ENCODE measurements at regions of chr2 and their contacts with region 1.

Region 1: DNA sequence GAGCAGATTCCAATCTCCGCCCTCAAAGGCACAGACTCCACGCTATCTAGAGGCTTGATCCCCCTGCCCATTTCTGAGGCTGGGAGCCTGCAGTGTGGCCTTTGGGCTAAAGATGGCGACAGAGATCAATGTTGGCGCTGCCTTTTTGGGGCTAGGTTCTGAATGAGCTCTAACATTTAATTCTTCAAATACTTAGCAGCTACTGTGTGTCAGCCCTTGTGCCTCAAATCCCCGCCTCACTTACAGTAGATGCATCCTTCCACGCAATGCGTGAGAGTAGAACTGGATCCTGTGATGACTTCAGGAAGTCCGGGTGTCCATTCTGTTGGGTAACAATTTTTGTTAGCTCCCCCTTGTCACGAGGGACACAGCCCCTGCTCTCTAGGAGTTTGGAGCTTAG is 12.4 kb downstream of the IL1F10 start:
- DNase-seq: peak in 1 of 2 experiments; percentile 63
- H3K4me3 ChIP-seq: peak overlapping the region; percentile 48; the same call in 1 of the 2 replicates
- H3K27ac ChIP-seq: peak overlapping the region; percentile 100
- H3K4me1 ChIP-seq: peaks cover 57% of the 10 kb centered on the region
- H3K27me3 ChIP-seq: no peaks in the 10 kb centered on the region
- CTCF ChIP-seq: peak; percentile 80

Region 2: DNA sequence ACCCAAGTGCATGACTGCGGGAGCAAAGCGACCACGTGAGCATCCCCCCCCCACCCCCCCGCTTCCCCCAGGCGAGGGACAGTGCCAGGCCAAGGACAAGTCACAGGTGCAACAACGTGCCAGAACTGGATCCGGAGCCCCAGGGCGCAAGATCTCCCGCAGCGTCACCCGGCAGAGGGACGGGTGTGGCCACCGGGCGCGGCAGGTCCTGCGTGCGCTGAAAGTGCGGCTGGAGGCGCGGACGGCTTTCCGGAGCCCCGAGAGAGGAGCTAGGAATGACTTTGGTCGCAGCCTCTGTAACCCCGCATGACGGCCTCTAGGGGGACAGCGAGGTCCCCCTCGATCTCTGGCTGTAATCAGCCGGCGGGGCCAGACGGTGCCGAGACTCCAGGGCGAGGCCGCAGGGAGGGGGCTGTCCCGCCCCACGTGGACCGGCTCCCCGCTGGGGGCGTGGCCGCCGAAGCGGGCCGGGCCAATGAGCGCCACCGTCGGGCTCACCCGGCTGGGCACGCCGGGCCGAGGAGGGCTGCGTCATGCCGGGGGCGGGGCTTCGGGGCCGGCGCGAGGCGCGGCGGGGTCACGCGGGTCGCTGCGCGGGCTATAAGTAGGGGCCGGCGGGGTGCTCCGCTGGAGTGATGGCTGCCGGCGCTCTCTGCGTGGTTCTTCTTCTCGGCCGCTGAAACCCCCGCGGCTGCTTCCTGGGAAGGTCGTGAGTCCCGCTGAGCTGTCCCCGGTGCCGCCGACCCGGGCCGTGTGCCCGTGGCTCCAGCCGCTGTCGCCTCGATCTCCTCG is 434.6 kb before region 1 on chr2 and contains the start of gene SLC20A1:
- CTCF ChIA-PET with region 1: no interaction called
- POLR2A ChIA-PET with region 1: no interaction called
- intact Hi-C with region 1: loop called (anchors 10 kb)
- DNase-seq: peak; percentile 93 to 98
- H3K4me3 ChIP-seq: peak within 1 kb of the TSS; percentile 99
- H3K27ac ChIP-seq: peak within 1 kb of the TSS; percentile 99
- H3K4me1 ChIP-seq: peaks cover 68% of the 10 kb centered on the region
- H3K27me3 ChIP-seq: no peaks in the 10 kb centered on the region
- CTCF ChIP-seq: peak; percentile 66
- total RNA-seq, gene SLC20A1: 99.9 and 106 TPM in 2 replicates

Region 3: GRCh38 chr2:112941753-112942658 is 138.1 kb before region 1 on chr2:
- CTCF ChIA-PET with region 1: interaction called, 4 read pairs
- POLR2A ChIA-PET with region 1: interaction called, 11 read pairs
- intact Hi-C with region 1: loop called (anchors 5 kb)
- DNase-seq: peak; percentile 37 to 74
- H3K4me3 ChIP-seq: no peak overlapping the region
- H3K27ac ChIP-seq: no peak overlapping the region
- H3K4me1 ChIP-seq: peaks cover 16% of the 10 kb centered on the region
- H3K27me3 ChIP-seq: no peaks in the 10 kb centered on the region
- CTCF ChIP-seq: peak; percentile 72

Region 4: DNA sequence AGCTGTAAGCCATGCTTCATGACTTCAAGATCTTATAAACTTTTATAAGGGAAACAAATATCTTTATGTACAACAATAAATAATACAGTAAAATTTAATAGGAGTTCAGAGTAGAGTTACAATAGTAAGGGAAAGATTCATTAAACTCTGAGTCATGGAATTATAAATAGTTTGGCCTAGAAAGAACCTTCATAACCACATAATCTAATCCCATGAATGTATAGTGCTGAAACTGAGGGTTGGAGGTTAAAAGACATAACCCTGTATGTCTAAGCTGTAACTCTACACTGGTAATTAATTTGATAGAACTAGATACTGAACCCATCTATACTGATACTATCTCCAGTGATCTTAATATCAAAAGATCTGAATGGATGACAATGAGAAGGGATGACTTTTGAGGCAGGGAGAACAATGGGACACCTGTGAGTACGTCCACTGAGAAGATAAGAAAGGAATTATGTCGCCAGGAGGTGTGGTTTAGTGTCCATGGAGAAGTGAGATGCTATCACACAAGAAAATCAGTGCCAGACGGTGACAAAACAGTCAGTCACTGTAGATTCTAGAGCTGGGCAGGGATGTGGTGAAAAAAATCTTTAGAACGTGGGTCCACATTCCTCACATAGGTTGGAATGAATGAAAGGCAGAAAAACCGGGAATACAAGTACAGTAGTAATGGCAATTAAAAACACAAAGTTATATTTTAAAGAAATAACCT is 11.3 kb before region 1 on chr2:
- CTCF ChIA-PET with region 1: interaction called, 6 read pairs
- POLR2A ChIA-PET with region 1: interaction called, 6 read pairs
- intact Hi-C with region 1: loop called (anchors 1 kb)
- DNase-seq: peak; percentile 59 to 96
- H3K4me3 ChIP-seq: no peak overlapping the region; the same call in 1 of the 2 replicates
- H3K27ac ChIP-seq: peak overlapping the region; percentile 87
- H3K4me1 ChIP-seq: peaks cover 52% of the 10 kb centered on the region
- H3K27me3 ChIP-seq: no peaks in the 10 kb centered on the region
- CTCF ChIP-seq: no peak

Region 5: DNA sequence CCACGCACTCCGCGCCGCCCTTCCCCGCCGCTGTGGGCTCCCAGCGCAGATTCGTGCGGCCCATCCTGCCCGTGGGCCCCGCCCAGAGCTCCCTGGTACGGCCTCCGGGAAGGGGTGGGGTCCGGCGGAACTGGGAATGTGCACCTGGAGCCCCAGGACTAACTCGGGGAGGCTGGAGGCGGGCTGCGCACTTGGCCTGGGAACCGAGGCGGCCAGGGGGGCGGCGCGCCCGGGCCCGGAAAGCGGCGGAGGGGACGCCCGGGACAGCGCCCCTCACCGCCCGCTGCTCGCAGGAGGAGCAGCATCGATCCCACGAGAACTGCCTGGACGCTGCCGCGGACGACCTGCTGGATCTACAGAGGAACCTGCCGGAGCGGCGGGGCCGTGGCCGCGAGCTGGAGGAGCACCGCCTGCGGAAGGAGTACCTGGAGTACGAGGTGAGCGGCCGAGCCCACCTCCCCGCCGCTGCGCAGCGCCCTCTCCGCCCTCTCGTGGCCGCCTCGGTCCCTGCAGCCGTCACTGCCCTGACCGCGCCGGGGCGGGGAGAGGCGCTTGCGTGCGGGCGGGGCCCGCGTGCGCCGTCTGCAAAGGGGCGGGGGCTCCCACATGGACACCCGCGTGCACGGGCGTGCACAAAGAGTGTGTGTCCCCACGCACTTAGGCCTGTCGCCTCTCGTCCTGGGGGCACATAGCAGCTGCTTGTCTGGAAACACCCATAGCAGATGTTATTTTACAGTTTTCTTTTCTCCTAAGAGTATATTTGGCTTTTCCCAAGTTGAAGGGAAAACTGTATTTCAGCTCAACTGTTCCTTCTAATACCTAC is 118.9 kb after region 1 on chr2:
- CTCF ChIA-PET with region 1: interaction called, 20 read pairs
- POLR2A ChIA-PET with region 1: interaction called, 6 read pairs
- intact Hi-C with region 1: loop called (anchors 1 kb)
- DNase-seq: peak; percentile 72 to 93
- H3K4me3 ChIP-seq: peak overlapping the region; percentile 67
- H3K27ac ChIP-seq: peak overlapping the region; percentile 78
- H3K4me1 ChIP-seq: peaks cover 6% of the 10 kb centered on the region; the same call in 1 of the 2 replicates
- H3K27me3 ChIP-seq: no peaks in the 10 kb centered on the region
- CTCF ChIP-seq: peak; percentile 83

Region 6: DNA sequence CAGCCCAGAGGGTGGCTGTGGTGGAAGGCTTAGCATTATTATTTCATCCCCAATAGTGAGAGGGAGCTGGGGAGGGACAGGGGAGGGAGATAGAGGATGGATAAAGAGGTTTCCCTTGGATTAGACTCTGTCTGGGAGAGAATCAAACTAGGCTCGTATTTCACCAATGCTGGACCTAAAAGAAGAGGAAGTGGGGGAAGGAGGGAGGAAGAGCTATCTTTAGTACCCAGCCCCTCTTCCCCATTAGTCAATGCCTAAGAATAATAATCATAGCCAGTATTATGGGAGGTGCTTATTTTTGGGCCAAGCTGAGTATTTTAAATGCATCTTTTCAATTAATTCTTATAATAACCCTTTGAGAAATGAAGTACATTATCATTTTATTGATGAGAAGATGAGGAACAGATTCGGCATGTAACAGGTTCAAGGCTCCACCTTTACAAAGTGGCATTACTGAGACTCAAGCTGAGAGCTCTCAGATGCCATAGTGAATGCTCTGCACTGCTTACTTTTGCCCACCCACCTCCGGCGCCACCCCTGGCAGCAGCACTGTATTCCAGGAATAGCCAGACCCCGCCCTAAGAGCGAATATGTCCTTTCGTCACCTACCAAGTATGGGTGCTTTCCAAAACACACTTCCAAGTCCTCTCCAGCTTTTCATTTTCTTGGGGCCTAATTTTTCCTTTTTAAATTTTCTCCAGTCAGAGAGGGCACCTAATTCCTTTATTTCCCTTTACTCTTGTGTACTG is 177.6 kb after region 1 on chr2:
- CTCF ChIA-PET with region 1: interaction called, 11 read pairs
- POLR2A ChIA-PET with region 1: no interaction called
- intact Hi-C with region 1: no loop called
- DNase-seq: no peak
- H3K4me3 ChIP-seq: no peak overlapping the region
- H3K27ac ChIP-seq: no peak overlapping the region
- H3K4me1 ChIP-seq: no peaks in the 10 kb centered on the region
- H3K27me3 ChIP-seq: no peaks in the 10 kb centered on the region
- CTCF ChIP-seq: no peak

Region 7: DNA sequence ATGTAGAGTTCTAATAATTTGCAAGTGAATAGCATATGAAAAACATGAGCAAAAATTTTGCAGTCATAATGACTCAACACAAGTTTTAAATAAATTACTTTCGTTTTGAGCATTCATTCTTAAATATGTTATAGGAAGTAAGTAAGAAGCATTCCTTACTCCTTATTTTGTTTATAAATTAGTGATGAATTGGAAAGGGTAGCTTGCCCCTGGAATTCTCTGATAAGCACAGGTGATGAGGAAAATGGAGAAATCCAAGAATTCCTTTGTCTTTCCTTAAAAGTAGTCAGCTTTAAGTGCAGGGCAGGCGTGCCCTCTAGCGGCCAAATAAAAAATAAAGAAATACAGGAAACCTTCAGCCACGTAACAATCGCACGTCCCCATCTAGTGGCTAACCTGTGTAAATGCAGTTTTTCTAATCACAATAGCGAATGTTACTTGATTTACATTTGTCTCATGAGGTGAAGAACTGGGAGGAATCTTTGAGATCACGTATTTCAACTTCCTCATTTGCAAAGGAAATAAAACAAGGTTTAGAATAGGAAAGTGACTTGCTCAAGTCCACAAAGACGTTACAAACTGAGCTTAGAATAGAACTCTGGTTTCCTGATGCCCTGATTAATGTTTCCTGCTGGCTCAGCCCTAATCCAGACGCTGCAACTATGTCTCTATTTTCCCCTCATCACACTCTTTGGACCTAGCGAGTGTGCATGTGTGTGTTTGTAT is 310.2 kb after region 1 on chr2:
- CTCF ChIA-PET with region 1: interaction called, 4 read pairs
- POLR2A ChIA-PET with region 1: no interaction called
- intact Hi-C with region 1: loop called (anchors 5 kb)
- DNase-seq: peak; percentile 59 to 63
- H3K4me3 ChIP-seq: no peak overlapping the region
- H3K27ac ChIP-seq: peak overlapping the region; percentile 56
- H3K4me1 ChIP-seq: peaks cover 5% of the 10 kb centered on the region
- H3K27me3 ChIP-seq: no peaks in the 10 kb centered on the region
- CTCF ChIP-seq: peak; percentile 94

Measured in PC-9 (cell line).